Caco-2 (cell line): ENCODE measurements at regions of chr22 and their contacts with region 1.

Region 1: GRCh38 chr22:46035742-46036557 is 59.0 kb upstream of the WNT7B start:
- DNase-seq: peak; percentile 98 to 99
- H3K4me3 ChIP-seq: peak overlapping the region; percentile 73
- H3K4me3 Mint-ChIP-seq: peak overlapping the region; percentile 76
- H3K27ac Mint-ChIP-seq: peak overlapping the region; percentile 53
- H3K4me1 ChIP-seq: peaks cover 6% of the 10 kb centered on the region; the same call in 1 of the 2 replicates
- H3K4me1 Mint-ChIP-seq: no peaks in the 10 kb centered on the region
- H3K27me3 ChIP-seq: no peaks in the 10 kb centered on the region
- H3K27me3 Mint-ChIP-seq: peaks cover 2% of the 10 kb centered on the region
- CTCF ChIP-seq: no peak

Region 2: DNA sequence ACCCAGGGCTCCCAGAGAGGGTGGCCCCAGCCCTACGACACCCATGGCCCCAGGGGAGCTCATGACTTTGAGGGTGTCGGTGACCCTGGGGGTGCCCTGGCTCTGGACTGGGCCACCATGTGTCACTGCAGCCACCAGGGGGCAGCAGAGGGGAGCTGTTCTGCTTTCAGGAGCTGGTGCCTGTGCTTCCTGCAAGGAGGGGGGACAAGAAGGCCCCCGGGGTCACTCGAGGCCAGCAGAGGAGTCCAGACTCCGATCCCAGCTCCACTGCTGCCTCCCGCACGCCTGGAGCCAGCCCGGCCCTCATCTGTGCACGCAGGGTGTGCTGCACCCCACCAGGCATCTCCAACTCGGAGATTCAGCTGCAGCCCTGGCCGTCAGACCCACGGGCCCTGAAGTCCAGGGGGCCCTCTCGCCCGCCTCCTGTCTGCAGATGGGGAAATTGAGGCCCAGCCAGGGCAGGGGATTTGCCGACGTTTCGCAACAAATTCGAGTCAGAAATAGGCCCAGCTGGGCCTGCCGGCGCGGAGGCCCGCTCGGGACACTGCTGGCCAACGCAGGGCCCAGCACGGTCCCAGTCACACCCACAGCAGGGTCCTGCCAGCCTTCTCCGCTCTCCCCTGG is 29.5 kb before region 1 on chr22:
- CTCF ChIA-PET with region 1: interaction called, 58 read pairs
- POLR2A ChIA-PET with region 1: interaction called, 3 read pairs
- intact Hi-C with region 1: no loop called
- DNase-seq: peak; percentile 89 to 90
- H3K4me3 ChIP-seq: no peak overlapping the region
- H3K4me3 Mint-ChIP-seq: no peak overlapping the region
- H3K27ac Mint-ChIP-seq: no peak overlapping the region
- H3K4me1 ChIP-seq: peaks cover 8% of the 10 kb centered on the region; the same call in 1 of the 2 replicates
- H3K4me1 Mint-ChIP-seq: no peaks in the 10 kb centered on the region
- H3K27me3 ChIP-seq: no peaks in the 10 kb centered on the region
- H3K27me3 Mint-ChIP-seq: no peaks in the 10 kb centered on the region
- CTCF ChIP-seq: peak; percentile 87 to 90

Region 3: GRCh38 chr22:46013460-46014416 is 22.2 kb before region 1 on chr22:
- CTCF ChIA-PET with region 1: interaction called, 22 read pairs
- POLR2A ChIA-PET with region 1: interaction called, 36 read pairs
- intact Hi-C with region 1: loop called (anchors 1 kb)
- DNase-seq: peak; percentile 96
- H3K4me3 ChIP-seq: peak overlapping the region; percentile 70
- H3K4me3 Mint-ChIP-seq: peak overlapping the region; percentile 73
- H3K27ac Mint-ChIP-seq: peak overlapping the region; percentile 83
- H3K4me1 ChIP-seq: peaks cover 16% of the 10 kb centered on the region
- H3K4me1 Mint-ChIP-seq: no peaks in the 10 kb centered on the region
- H3K27me3 ChIP-seq: no peaks in the 10 kb centered on the region
- H3K27me3 Mint-ChIP-seq: no peaks in the 10 kb centered on the region
- CTCF ChIP-seq: peak; percentile 74 to 87

Region 4: GRCh38 chr22:46019351-46019750 is 16.6 kb before region 1 on chr22:
- CTCF ChIA-PET with region 1: interaction called, 22 read pairs
- POLR2A ChIA-PET with region 1: interaction called, 36 read pairs
- intact Hi-C with region 1: no loop called
- DNase-seq: peak in 1 of 2 experiments; percentile 18
- H3K4me3 ChIP-seq: no peak overlapping the region
- H3K4me3 Mint-ChIP-seq: no peak overlapping the region
- H3K27ac Mint-ChIP-seq: no peak overlapping the region
- H3K4me1 ChIP-seq: peaks cover 12% of the 10 kb centered on the region; the same call in 1 of the 2 replicates
- H3K4me1 Mint-ChIP-seq: peaks cover 7% of the 10 kb centered on the region
- H3K27me3 ChIP-seq: no peaks in the 10 kb centered on the region
- H3K27me3 Mint-ChIP-seq: peaks cover 2% of the 10 kb centered on the region
- CTCF ChIP-seq: no peak

Region 5: DNA sequence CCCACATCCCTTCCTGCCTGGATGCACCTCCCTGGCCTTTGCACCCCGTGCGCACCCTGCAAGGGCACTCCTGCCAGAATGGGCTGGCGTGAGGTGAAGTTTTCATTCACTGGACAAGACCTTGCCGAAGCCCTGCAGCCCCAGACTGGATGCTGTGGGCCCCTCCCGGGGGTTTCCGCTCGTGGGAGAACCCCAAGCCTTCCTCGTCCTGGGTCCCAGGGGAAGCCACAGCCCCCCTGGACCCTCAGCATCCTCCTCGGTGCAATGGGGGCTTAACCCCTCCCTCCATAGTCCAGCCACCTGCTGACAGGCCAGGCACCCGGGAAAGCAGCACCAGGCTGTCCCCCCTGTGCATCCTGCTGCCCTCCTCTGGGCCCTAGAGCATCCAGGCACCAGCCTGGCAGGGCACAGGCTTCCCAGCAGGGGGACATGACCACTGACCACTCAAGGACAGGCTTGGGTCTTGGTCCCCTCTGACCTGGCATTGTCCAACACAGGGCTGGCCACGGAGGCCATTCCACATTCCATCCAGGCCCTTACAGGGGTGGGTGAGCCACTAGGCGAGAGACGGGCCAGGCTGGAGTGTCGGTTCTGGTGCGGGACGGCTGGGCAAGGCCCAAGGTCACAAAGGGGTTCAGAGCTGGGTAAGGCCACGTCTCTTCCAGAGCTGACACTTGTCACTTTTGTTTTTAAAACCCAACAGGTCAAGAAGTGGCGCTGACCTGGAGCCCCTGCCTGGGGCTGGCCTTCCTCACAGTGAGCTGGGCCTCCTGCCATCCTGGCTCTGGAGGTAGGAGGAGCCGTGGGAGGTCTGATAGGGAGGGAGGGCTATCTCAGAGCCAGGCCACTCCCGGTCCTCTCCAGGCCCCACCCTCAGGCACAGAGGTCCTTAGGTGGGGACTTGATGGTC is 72.9 kb after region 1 on chr22:
- CTCF ChIA-PET with region 1: no interaction called
- POLR2A ChIA-PET with region 1: interaction called, 5 read pairs
- intact Hi-C with region 1: loop called (anchors 1 kb)
- DNase-seq: peak; percentile 40 to 60
- H3K4me3 ChIP-seq: no peak overlapping the region
- H3K4me3 Mint-ChIP-seq: no peak overlapping the region
- H3K27ac Mint-ChIP-seq: peak overlapping the region; percentile 56
- H3K4me1 ChIP-seq: peaks cover 72% of the 10 kb centered on the region
- H3K4me1 Mint-ChIP-seq: peaks cover 18% of the 10 kb centered on the region
- H3K27me3 ChIP-seq: no peaks in the 10 kb centered on the region
- H3K27me3 Mint-ChIP-seq: no peaks in the 10 kb centered on the region
- CTCF ChIP-seq: no peak

Region 6: GRCh38 chr22:46116491-46116958 is 80.6 kb after region 1 on chr22:
- CTCF ChIA-PET with region 1: interaction called, 13 read pairs
- POLR2A ChIA-PET with region 1: no interaction called
- intact Hi-C with region 1: no loop called
- DNase-seq: peak; percentile 90 to 94
- H3K4me3 ChIP-seq: no peak overlapping the region
- H3K4me3 Mint-ChIP-seq: no peak overlapping the region
- H3K27ac Mint-ChIP-seq: no peak overlapping the region
- H3K4me1 ChIP-seq: peaks cover 7% of the 10 kb centered on the region
- H3K4me1 Mint-ChIP-seq: no peaks in the 10 kb centered on the region
- H3K27me3 ChIP-seq: no peaks in the 10 kb centered on the region
- H3K27me3 Mint-ChIP-seq: no peaks in the 10 kb centered on the region
- CTCF ChIP-seq: peak; percentile 80 to 98